ENCODE measurements at regions of chr4 and their contacts with region 1.

Region 1: GRCh38 chr4:20260821-20261220 is 9.1 kb downstream of the SLIT2 start:
- DNase-seq: no peak
- H3K4me3 Mint-ChIP-seq: no peak overlapping the region
- H3K27ac Mint-ChIP-seq: no peak overlapping the region
- H3K4me1 Mint-ChIP-seq: no peaks in the 10 kb centered on the region
- H3K27me3 Mint-ChIP-seq: peaks cover 5% of the 10 kb centered on the region

Region 2: DNA sequence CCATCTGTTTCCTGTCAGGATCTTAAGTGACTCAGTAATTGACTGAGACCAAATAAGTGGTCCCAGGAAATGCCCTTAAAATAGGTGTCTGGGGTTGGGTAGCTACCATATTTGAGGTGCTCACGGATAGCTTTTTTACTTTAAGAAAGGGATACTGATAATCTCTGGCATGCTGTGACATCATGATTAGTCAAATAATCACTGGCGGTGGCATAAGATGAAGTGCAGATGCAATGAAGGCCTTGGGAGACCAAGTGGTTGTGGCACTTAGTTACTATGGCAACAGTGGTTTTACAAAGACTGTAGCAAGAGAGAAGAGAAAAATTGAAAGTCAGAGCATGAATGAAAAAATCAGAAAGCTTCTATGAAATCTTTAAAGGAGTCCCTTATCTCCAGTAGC is 123.6 kb before region 1 on chr4:
- CTCF ChIA-PET with region 1: no interaction called
- DNase-seq: no peak
- H3K4me3 Mint-ChIP-seq: no peak overlapping the region
- H3K27ac Mint-ChIP-seq: no peak overlapping the region
- H3K4me1 Mint-ChIP-seq: no peaks in the 10 kb centered on the region
- H3K27me3 Mint-ChIP-seq: no peaks in the 10 kb centered on the region

Region 3: GRCh38 chr4:20248155-20248558 is 12.7 kb before region 1 on chr4:
- CTCF ChIA-PET with region 1: interaction called, 10 read pairs
- DNase-seq: no peak
- H3K4me3 Mint-ChIP-seq: no peak overlapping the region
- H3K27ac Mint-ChIP-seq: no peak overlapping the region
- H3K4me1 Mint-ChIP-seq: peaks cover 6% of the 10 kb centered on the region
- H3K27me3 Mint-ChIP-seq: peaks cover 30% of the 10 kb centered on the region